ENCODE measurements at regions of chr9 and their contacts with region 1.

Region 1: GRCh38 chr9:76403352-76403751 is 9.1 kb upstream of the RFK start:
- DNase-seq: peak; percentile 64
- ATAC-seq: peak; percentile 62
- H3K4me3 ChIP-seq: peak overlapping the region; percentile 26 to 48 (median 40); a peak in 4 of 6 replicates
- H3K27ac ChIP-seq: peak overlapping the region; percentile 30
- H3K4me1 ChIP-seq: peaks cover 50% of the 10 kb centered on the region
- H3K27me3 ChIP-seq: no peaks in the 10 kb centered on the region
- CTCF ChIP-seq: peak; percentile 47
- EP300 ChIP-seq: no peak
- POLR2A ChIP-seq: no peak
- RAD21 ChIP-seq: peak; percentile 24; the same call in 1 of the 2 replicates

Region 2: DNA sequence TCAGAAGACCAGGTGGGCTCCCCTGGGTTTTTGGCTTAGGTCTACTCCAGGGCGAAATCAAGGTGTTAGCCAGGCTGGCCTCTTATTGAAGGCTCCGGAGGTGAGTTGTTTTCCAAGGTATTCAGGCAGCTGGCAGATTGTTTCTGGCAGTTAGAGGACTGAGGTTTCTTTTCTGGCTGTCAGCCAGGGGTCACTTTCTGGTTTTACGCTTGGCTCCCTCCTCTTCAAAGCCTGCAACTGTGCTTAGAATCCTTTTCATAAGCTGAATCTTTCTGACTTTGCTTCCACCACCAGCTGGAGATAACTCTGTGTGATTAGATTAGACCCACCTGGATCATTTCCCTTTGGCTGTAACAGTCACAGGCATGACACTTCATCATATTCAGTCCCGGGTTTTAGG is 33.8 kb before region 1 on chr9:
- CTCF ChIA-PET with region 1: no interaction called
- POLR2A ChIA-PET with region 1: no interaction called
- in situ Hi-C with region 1: no loop called
- intact Hi-C with region 1: loop called (anchors 5 kb)
- DNase-seq: peak; percentile 51
- ATAC-seq: no peak; the same call in 2 of the 3 replicates
- H3K4me3 ChIP-seq: no peak overlapping the region
- H3K27ac ChIP-seq: no peak overlapping the region
- H3K4me1 ChIP-seq: peaks cover 62% of the 10 kb centered on the region
- H3K27me3 ChIP-seq: no peaks in the 10 kb centered on the region; a peak in 1 of 5 replicates
- CTCF ChIP-seq: no peak
- EP300 ChIP-seq: no peak
- POLR2A ChIP-seq: no peak
- RAD21 ChIP-seq: no peak

Region 3: DNA sequence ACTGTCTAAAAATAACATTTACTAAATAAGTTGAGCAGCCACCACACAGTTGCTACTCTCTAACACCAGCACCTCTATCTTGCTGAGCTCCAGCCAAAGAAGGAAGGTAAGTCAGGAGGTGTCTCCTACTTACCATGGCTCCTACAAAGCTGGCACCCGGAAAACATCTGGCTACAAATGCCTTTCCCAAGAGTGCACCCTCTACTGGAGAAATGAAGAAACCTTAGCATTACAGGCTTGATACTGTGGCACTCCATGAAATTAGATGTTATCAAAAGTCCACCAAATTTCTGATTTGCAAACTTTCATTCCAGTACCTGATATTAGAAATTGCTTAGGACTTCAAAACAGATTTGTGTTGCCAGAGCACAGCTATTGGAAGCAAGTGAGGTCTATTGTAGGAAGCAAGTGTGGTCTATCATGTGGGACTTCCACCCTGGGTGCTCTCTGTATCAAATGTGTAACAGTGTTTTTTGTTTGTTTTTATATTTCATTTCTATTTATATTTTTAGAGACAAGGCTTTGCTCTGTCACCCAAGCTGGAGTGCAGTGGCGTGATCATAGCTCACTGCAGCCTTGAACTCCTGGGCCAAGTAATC is 16.5 kb after region 1 on chr9:
- CTCF ChIA-PET with region 1: no interaction called
- POLR2A ChIA-PET with region 1: no interaction called
- in situ Hi-C with region 1: no loop called
- intact Hi-C with region 1: loop called (anchors 2 kb)
- DNase-seq: peak; percentile 36
- ATAC-seq: peak; percentile 52; the same call in 2 of the 3 replicates
- H3K4me3 ChIP-seq: no peak overlapping the region
- H3K27ac ChIP-seq: no peak overlapping the region
- H3K4me1 ChIP-seq: peaks cover 80% of the 10 kb centered on the region
- H3K27me3 ChIP-seq: no peaks in the 10 kb centered on the region
- CTCF ChIP-seq: peak; percentile 58
- EP300 ChIP-seq: no peak
- POLR2A ChIP-seq: no peak
- RAD21 ChIP-seq: no peak

Region 4: GRCh38 chr9:76448501-76448900 is 45.1 kb after region 1 on chr9:
- CTCF ChIA-PET with region 1: no interaction called
- POLR2A ChIA-PET with region 1: no interaction called
- in situ Hi-C with region 1: no loop called
- intact Hi-C with region 1: no loop called
- DNase-seq: no peak
- ATAC-seq: no peak
- H3K4me3 ChIP-seq: no peak overlapping the region
- H3K27ac ChIP-seq: no peak overlapping the region
- H3K4me1 ChIP-seq: peaks cover 12% of the 10 kb centered on the region
- H3K27me3 ChIP-seq: no peaks in the 10 kb centered on the region
- CTCF ChIP-seq: no peak
- EP300 ChIP-seq: no peak
- POLR2A ChIP-seq: no peak
- RAD21 ChIP-seq: no peak

Region 5: GRCh38 chr9:76458903-76459690 is 55.7 kb after region 1 on chr9 and contains the start of gene GCNT1:
- CTCF ChIA-PET with region 1: no interaction called
- POLR2A ChIA-PET with region 1: no interaction called
- in situ Hi-C with region 1: no loop called
- intact Hi-C with region 1: loop called (anchors 2 kb)
- DNase-seq: peak; percentile 71
- ATAC-seq: peak; percentile 90
- H3K4me3 ChIP-seq: peak within 1 kb of the TSS; percentile 49 to 74 (median 71)
- H3K27ac ChIP-seq: no peak within 1 kb of the TSS
- H3K4me1 ChIP-seq: peaks cover 40% of the 10 kb centered on the region
- H3K27me3 ChIP-seq: peaks cover 0 to 19% of the 10 kb centered on the region in 2 experiments; a peak in 1 of 5 replicates
- CTCF ChIP-seq: peak; percentile 83
- EP300 ChIP-seq: no peak
- POLR2A ChIP-seq: 0 out of 4 replicates have a peak, but pooled peaks of 1 of the 2 experiments have one; percentile 16
- RAD21 ChIP-seq: 0 out of 2 replicates have a peak, but pooled peaks have one; percentile 34
- total RNA-seq, gene GCNT1: 0.18 and 0.55 TPM in 2 replicates

Region 6: DNA sequence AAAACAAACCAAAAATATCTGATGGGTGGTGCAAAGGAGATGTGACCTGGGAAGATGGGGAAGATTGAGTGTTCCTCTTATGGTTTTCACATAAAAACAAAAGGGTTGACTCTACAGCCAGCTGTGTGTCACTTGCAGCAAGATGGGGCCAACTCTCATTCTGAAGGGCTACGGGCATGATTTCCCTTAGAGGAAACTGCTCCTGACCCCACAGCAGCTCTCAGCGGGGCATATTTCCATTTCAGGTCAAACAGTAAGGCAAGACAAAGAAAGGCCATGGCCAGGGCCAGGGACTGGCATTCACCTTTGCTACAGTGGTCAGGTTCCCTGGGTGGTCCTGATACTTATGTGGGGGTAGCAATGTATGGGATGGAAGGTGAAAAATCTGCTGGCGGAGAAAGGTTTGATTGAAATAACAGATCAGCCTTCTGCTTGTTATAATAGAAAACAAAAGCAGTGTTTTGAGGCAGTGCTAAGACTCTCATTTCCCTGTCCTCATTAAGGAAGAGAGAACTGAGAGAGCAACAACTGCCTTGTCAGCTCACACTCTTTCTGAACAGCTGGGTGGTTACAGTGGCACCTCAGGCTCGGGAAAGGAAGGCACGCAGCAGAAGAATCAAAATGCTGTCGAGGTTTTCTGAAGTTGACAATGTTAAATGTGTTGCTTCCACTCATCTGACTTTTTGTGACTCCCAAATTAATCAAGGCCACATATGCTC is 240.2 kb after region 1 on chr9:
- CTCF ChIA-PET with region 1: no interaction called
- POLR2A ChIA-PET with region 1: no interaction called
- in situ Hi-C with region 1: no loop called
- intact Hi-C with region 1: no loop called
- DNase-seq: no peak
- ATAC-seq: no peak
- H3K4me3 ChIP-seq: no peak overlapping the region
- H3K27ac ChIP-seq: no peak overlapping the region
- H3K4me1 ChIP-seq: no peaks in the 10 kb centered on the region
- H3K27me3 ChIP-seq: peaks cover 0 to 9% of the 10 kb centered on the region in 2 experiments; a peak in 2 of 5 replicates
- CTCF ChIP-seq: no peak
- EP300 ChIP-seq: no peak
- POLR2A ChIP-seq: no peak
- RAD21 ChIP-seq: no peak

Region 7: GRCh38 chr9:76658535-76659231 is 255.3 kb after region 1 on chr9:
- CTCF ChIA-PET with region 1: no interaction called
- POLR2A ChIA-PET with region 1: no interaction called
- in situ Hi-C with region 1: no loop called
- intact Hi-C with region 1: loop called (anchors 5 kb)
- DNase-seq: peak; percentile 38
- ATAC-seq: peak; percentile 95
- H3K4me3 ChIP-seq: no peak overlapping the region
- H3K27ac ChIP-seq: no peak overlapping the region
- H3K4me1 ChIP-seq: no peaks in the 10 kb centered on the region
- H3K27me3 ChIP-seq: no peaks in the 10 kb centered on the region
- CTCF ChIP-seq: peak; percentile 75
- EP300 ChIP-seq: no peak
- POLR2A ChIP-seq: no peak
- RAD21 ChIP-seq: peak; percentile 58